HepG2 (cell line): ENCODE measurements at regions of chr7 and their contacts with region 1.

Region 1: DNA sequence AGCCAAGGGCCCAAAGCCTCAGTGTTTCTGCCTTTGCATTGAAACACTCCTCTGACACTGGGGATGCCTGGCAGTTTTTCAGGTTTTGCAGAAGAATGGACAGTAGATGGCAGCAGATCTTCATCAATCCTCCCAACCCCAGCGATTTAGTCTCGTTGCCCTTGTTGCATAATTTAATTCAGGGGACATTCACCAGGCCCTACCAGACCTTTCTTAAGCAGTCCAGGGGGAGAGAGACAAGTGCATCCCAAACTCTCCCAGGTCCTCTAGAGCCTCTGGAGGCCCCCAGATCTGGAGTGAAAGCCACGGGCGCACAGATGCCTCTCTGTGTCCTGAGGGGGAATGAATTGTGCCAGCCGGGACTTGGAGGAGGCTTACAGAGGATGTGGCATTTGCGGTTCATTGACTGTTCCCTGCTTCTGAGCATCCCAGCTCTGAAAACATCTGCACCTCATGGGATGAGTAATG is 29.6 kb downstream of the MINDY4 start:
- DNase-seq: peak; percentile 34
- ATAC-seq: peak; percentile 76
- H3K4me3 ChIP-seq: no peak overlapping the region
- H3K27ac ChIP-seq: no peak overlapping the region
- H3K4me1 ChIP-seq: peaks cover 21% of the 10 kb centered on the region
- H3K27me3 ChIP-seq: peaks cover 0 to 5% of the 10 kb centered on the region in 2 experiments; a peak in 1 of 5 replicates
- CTCF ChIP-seq: peak; percentile 75
- EP300 ChIP-seq: no peak
- POLR2A ChIP-seq: no peak
- RAD21 ChIP-seq: no peak

Region 2: DNA sequence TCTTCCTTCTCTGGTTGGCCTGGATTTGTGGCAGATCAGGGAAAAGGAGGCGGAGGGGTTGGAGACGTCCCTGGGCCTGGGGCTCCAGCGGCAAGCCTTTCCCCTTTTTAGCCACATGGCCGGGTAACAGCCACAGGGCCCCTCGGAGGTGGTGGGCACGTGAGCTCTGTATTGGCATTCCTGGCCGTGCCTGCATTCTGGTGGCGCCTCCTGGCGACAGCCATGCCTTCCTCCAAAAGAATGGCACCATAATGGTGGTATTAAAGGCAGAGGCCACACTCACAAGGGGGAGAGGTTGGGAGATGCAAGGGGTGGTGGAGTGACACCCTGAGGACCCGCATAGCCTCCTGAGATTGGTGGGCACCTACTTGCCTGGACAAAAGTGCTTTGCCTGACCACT is 107.9 kb after region 1 on chr7:
- CTCF ChIA-PET with region 1: interaction called, 5 read pairs
- POLR2A ChIA-PET with region 1: no interaction called
- in situ Hi-C with region 1: no loop called
- intact Hi-C with region 1: loop called (anchors 1 kb)
- DNase-seq: no peak
- ATAC-seq: peak; percentile 50
- H3K4me3 ChIP-seq: no peak overlapping the region
- H3K27ac ChIP-seq: no peak overlapping the region
- H3K4me1 ChIP-seq: no peaks in the 10 kb centered on the region
- H3K27me3 ChIP-seq: peaks cover 3 to 4% of the 10 kb centered on the region in 2 experiments; a peak in 3 of 5 replicates
- CTCF ChIP-seq: peak; percentile 55
- EP300 ChIP-seq: no peak
- POLR2A ChIP-seq: no peak
- RAD21 ChIP-seq: no peak

Region 3: GRCh38 chr7:30974605-30975255 is 173.9 kb after region 1 on chr7:
- CTCF ChIA-PET with region 1: interaction called, 8 read pairs
- POLR2A ChIA-PET with region 1: no interaction called
- in situ Hi-C with region 1: loop called (anchors 5 kb)
- intact Hi-C with region 1: no loop called
- DNase-seq: peak; percentile 60
- ATAC-seq: peak; percentile 95
- H3K4me3 ChIP-seq: no peak overlapping the region
- H3K27ac ChIP-seq: no peak overlapping the region
- H3K4me1 ChIP-seq: peaks cover 11% of the 10 kb centered on the region
- H3K27me3 ChIP-seq: no peaks in the 10 kb centered on the region; a peak in 1 of 5 replicates
- CTCF ChIP-seq: peak; percentile 87
- EP300 ChIP-seq: no peak
- POLR2A ChIP-seq: no peak
- RAD21 ChIP-seq: peak; percentile 65; the same call in 1 of the 2 replicates

Region 4: GRCh38 chr7:31122649-31123058 is 321.8 kb after region 1 on chr7:
- CTCF ChIA-PET with region 1: interaction called, 9 read pairs
- POLR2A ChIA-PET with region 1: no interaction called
- in situ Hi-C with region 1: loop called (anchors 5 kb)
- intact Hi-C with region 1: loop called (anchors 2 kb)
- DNase-seq: peak; percentile 45
- ATAC-seq: peak; percentile 73
- H3K4me3 ChIP-seq: no peak overlapping the region
- H3K27ac ChIP-seq: no peak overlapping the region
- H3K4me1 ChIP-seq: no peaks in the 10 kb centered on the region
- H3K27me3 ChIP-seq: 0 out of 5 replicates have a peak, but pooled peaks cover 0 to 3% of the 10 kb centered on the region in 2 experiments
- CTCF ChIP-seq: peak; percentile 83
- EP300 ChIP-seq: no peak
- POLR2A ChIP-seq: no peak
- RAD21 ChIP-seq: 0 out of 2 replicates have a peak, but pooled peaks have one; percentile 47